ENCODE measurements at regions of chr2 and their contacts with region 1.

Region 1: GRCh38 chr2:42792583-42793333 is at the start of gene HAAO:
- DNase-seq: peak; percentile 59
- H3K4me3 ChIP-seq: peak within 1 kb of the TSS; percentile 45 to 66 (median 58)
- H3K27ac ChIP-seq: peak within 1 kb of the TSS; percentile 71 to 88 (median 80)
- H3K4me1 ChIP-seq: peaks cover 0 to 26% (median 17%) of the 10 kb centered on the region in 4 donors
- H3K27me3 ChIP-seq: no peaks in the 10 kb centered on the region
- CTCF ChIP-seq: no peak
- EP300 ChIP-seq: no peak
- POLR2A ChIP-seq: no peak
- total RNA-seq, gene HAAO: 2.5 to 5.6 (median 3.5) TPM

Region 2: GRCh38 chr2:42494355-42495233 is 298.2 kb before region 1 on chr2:
- intact Hi-C with region 1: loop called (anchors 10 kb)
- DNase-seq: peak; percentile 80
- H3K4me3 ChIP-seq: peak overlapping the region; percentile 26 to 59 (median 54)
- H3K27ac ChIP-seq: peak overlapping the region in 2 of 4 donors; percentile 10 to 51
- H3K4me1 ChIP-seq: peaks cover 0 to 25% (median 22%) of the 10 kb centered on the region in 4 donors
- H3K27me3 ChIP-seq: peaks cover 13 to 53% (median 16%) of the 10 kb centered on the region in 3 donors
- CTCF ChIP-seq: peak; percentile 49 to 85 (median 74)
- EP300 ChIP-seq: no peak
- POLR2A ChIP-seq: no peak

Measured in sigmoid colon (tissue), 7 donors.